ENCODE measurements at regions of chr12 and their contacts with region 1.

Region 1: DNA sequence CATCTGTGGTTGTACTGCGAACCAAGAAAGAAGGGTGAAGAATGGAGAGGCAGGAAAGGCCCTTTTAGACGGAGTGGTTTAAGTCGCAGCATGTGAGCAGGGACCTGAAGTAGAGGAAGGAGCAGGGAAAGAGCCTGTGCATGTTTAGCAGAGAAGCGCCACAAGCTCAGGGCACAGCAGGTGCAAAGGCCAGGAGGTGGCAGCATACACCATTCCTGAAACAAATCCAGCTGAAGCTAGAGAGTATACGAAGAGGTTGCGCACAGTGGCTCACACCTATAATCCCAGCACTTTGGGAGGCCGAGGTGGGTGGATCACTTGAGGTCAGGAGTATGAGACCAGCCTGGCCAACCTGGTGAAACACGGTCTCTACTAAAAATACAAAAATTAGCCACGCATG is 49.9 kb downstream of the HELB start:
- DNase-seq: no peak
- ATAC-seq: no peak

Region 2: GRCh38 chr12:65823513-65824375 is 528.5 kb before region 1 on chr12:
- intact Hi-C with region 1: no loop called
- DNase-seq: peak; percentile 71
- ATAC-seq: peak; percentile 26

Region 3: DNA sequence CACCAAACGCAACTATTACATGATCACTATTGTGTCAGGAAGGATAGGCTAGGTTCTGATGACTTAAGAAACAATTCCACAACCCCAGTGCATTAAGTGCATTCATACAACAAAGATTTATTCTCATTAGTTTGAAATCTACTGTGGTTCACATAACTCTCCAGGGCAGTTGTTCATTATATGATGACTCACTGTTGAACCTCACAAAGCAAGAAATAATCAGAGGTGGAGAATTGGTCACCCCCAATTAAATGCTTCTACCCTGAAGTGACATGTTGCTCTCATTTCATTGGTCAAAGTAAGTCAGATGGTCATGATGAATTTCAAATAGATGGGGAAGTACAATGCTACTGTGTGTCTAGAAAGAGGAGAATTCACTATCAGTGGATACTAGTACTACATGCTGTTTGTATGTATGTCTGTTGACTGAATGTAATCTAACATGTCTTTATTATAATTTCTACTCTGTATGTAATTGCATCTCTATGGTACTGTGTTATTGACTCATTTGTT is 56.0 kb before region 1 on chr12:
- intact Hi-C with region 1: loop called (anchors 5 kb)
- DNase-seq: no peak
- ATAC-seq: no peak

Region 4: GRCh38 chr12:66453844-66454243 is 101.6 kb after region 1 on chr12:
- intact Hi-C with region 1: no loop called
- DNase-seq: no peak
- ATAC-seq: no peak

Measured in Right ventricle myocardium inferior (tissue), 1 donor.